BJ (cell line): ENCODE measurements at regions of chr11 and their contacts with region 1.

Region 1: DNA sequence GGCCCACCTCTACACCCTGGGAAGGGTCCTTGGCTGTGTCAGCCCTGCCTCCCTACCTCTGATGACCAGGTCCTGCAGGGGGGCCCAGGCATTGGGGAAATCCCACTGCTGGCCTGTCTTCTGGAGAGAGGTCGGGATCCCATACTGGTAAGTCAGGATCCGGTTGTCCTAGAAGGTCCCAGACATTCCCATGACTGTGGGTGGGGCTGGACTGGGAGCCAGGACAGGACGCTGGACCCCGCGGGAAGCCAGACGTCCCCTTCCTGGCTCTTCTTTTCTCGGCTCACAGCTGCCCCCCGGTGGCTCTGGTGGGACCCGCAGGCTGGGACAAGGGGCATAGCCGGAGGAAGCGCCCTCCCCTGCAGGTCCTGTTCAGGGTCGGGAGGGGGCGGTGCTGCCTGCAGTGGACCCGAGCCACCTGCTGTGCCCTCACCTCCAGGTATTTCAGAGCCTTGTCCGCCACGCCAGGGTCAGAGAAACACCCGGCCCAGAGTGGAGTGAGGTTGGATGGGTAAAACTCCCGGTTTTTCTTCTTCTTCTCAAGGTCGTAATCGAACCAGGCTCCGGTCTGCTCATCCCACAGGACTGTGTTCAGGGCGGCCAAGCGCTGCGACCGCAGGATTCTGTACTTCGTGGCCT is 20.0 kb downstream of the TREH start:
- DNase-seq: no peak
- H3K4me3 ChIP-seq: no peak overlapping the region
- H3K27me3 ChIP-seq: no peaks in the 10 kb centered on the region
- CTCF ChIP-seq: peak; percentile 99

Region 2: GRCh38 chr11:118592616-118593367 is 66.6 kb before region 1 on chr11:
- CTCF ChIA-PET with region 1: interaction called, 29 read pairs
- POLR2A ChIA-PET with region 1: no interaction called
- DNase-seq: no peak
- H3K4me3 ChIP-seq: no peak overlapping the region
- H3K27me3 ChIP-seq: no peaks in the 10 kb centered on the region
- CTCF ChIP-seq: no peak

Region 3: GRCh38 chr11:118610804-118611795 is 48.3 kb before region 1 on chr11:
- CTCF ChIA-PET with region 1: interaction called, 56 read pairs
- POLR2A ChIA-PET with region 1: no interaction called
- DNase-seq: no peak
- H3K4me3 ChIP-seq: peak overlapping the region; percentile 68
- H3K27me3 ChIP-seq: no peaks in the 10 kb centered on the region
- CTCF ChIP-seq: peak; percentile 85

Region 4: DNA sequence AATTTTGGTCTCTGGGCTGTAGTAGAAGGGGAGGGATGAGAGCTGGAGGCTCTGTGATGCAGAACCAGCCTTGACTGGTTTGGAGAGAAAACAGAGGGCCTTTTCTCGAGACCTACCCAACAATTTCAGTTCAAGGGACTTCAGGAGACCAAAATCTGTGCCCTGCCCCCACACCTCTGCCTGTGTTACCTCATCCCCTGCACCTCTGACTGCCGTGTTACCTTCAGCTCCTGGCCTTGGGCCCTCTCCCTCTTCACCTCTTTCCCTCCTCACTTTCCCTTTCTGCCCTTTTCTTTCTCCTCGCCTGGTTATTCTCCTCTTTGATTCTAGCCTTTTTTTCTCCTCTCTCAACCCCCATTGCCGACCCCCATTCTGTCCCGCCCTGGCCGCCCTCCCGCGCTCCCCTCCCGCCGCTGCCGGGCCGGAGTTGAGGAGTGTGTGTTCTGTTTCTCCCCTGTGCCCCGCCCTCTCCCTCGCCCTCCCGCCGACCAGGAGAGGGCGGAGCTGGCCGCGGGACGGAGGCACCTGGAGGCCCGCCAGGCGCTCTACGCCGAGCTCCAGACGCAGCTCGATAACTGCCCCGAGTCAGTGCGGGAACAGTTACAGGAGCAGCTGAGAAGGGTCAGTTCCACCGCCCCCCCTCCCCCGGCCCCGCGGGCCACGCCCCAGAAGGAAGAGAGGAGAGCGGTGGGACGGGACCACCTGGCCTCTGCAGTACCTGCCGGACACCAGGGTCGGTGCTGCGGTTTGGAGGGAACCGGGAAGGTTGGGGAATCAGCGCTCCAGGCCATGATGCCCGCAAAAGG is 24.8 kb before region 1 on chr11:
- CTCF ChIA-PET with region 1: interaction called, 12 read pairs
- POLR2A ChIA-PET with region 1: no interaction called
- DNase-seq: no peak
- H3K4me3 ChIP-seq: no peak overlapping the region
- H3K27me3 ChIP-seq: no peaks in the 10 kb centered on the region
- CTCF ChIP-seq: peak; percentile 32; the same call in 1 of the 2 replicates

Region 5: DNA sequence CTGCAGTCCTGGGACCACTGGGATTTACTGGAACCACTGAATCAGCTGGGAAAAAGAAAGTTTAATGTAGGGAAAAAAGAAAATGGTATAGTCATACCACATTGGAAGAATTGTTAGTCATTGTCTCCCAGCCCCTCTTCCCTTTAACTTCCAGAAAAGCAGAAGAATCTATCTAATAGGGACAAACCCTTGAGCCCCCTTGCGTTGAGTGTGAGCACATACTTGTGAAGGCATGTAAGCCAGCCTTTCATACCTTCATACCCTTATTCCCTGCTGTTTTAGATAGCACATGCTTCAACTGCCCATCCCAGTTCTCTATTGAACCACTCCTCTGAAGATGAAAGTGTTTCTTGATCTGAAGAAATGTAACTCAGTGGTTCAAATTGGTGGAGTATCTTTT is 13.4 kb after region 1 on chr11:
- CTCF ChIA-PET with region 1: interaction called, 14 read pairs
- POLR2A ChIA-PET with region 1: no interaction called
- DNase-seq: no peak
- H3K4me3 ChIP-seq: no peak overlapping the region
- H3K27me3 ChIP-seq: no peaks in the 10 kb centered on the region; the same call in none of the 2 replicates
- CTCF ChIP-seq: no peak; the same call in 1 of the 2 replicates

Region 6: GRCh38 chr11:118956094-118956846 is 296.8 kb after region 1 on chr11 and contains the start of gene UPK2:
- CTCF ChIA-PET with region 1: interaction called, 11 read pairs
- POLR2A ChIA-PET with region 1: no interaction called
- DNase-seq: no peak
- H3K4me3 ChIP-seq: no peak within 1 kb of the TSS
- H3K27me3 ChIP-seq: peaks cover 19% of the 10 kb centered on the region
- CTCF ChIP-seq: peak; percentile 95
- polyA plus RNA-seq, gene UPK2: 0.18 and 0.20 TPM in 2 replicates

Region 7: DNA sequence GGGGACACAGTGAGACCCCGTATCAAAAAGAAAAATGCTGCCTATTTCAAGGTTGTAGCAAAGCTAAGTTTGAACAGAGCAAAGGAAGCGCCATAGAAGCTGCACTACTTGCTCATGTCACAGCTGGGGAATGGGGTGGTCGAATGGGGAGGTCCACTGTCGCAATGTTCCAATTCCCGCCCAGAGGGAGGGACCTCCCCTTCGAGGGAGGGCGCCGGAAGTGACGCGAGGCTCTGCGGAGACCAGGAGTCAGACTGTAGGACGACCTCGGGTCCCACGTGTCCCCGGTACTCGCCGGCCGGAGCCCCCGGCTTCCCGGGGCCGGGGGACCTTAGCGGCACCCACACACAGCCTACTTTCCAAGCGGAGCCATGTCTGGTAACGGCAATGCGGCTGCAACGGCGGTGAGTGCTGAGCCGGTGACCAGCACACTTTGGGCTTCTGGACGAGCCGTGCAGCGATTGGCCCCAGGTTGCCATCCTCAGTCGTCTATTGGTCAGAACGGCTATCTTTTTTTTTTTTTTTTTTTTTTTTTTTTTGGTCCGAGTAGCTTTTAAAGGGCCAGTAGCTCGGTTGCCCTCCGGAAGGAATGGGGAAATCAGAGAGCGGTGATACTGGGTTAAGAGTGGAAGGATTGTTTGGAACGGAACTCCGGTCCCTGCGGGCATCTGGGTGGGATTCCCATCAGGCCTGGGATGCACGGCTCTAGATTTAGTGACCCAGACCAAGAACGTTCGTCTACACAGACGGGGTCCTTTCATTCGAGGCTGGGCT is 425.4 kb after region 1 on chr11 and contains the start of gene HMBS:
- CTCF ChIA-PET with region 1: no interaction called
- POLR2A ChIA-PET with region 1: no interaction called
- DNase-seq: peak; percentile 74
- H3K4me3 ChIP-seq: peak within 1 kb of the TSS; percentile 78
- H3K27me3 ChIP-seq: no peaks in the 10 kb centered on the region
- CTCF ChIP-seq: no peak
- polyA plus RNA-seq, gene HMBS: 38.4 and 54.9 TPM in 2 replicates